ENCODE measurements at regions of chr10 and their contacts with region 1.

Region 1: DNA sequence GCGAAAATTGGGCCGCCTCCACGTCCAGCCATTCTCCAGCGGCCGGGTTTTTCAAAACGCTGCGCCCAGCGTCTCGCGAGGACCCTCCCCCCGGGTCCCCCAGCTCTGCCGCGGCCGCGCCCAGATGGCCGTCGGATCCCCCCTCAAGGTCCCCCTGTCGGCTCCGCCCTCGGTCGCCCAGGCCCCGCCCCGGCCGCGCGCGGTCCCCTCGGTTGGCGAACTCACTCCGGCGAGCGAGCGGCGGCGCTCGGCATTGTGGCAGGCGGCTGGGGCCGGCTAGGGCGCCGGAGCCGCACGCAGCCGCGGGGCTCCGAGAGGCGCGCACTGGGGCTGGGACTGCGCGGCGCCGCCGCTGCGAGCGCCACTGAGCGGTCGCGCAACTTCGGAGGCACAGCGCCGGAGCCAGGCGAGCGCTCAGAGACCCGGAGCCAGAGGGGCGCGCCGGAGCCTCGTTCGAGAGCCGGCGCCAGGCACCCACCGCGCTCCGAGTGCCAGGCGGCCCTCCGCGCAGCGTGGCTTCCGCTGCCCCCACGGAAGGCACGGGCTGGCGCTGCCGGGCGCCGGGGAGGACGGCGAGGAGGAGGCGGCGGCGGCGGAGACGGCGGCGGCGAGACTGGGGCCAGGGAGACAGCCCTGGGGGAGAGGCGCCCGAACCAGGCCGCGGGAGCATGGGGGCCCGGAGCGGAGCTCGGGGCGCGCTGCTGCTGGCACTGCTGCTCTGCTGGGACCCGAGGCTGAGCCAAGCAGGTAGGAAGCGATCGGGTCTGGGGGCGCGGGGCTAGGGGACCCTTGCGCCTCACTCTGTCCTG is at the start of gene UNC5B:
- DNase-seq: peak; percentile 94
- ATAC-seq: peak; percentile 93
- total RNA-seq, gene UNC5B: 13.1 TPM

Region 2: GRCh38 chr10:70903262-70903921 is 309.1 kb before region 1 on chr10:
- intact Hi-C with region 1: loop called (anchors 1 kb)
- DNase-seq: no peak
- ATAC-seq: peak; percentile 57

Region 3: DNA sequence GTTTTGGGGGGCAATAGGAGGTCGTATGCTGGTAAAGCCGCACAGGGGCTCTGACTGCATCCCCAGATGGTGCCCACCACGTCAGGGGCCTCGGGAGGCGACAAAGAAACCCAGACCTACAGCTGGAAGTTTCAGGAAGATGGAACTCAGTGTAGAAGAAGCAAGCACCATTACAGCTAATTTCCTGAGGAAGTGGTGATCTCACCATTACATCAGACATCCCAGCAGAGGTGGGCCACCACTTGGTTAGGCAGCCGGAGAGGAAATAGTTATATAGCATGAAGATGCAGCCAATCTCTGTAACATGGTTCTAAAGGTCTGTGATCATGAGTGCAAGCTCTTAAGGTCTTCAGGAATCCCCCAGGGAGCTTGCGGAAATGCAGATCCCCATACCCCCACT is 196.8 kb before region 1 on chr10:
- intact Hi-C with region 1: loop called (anchors 5 kb)
- DNase-seq: no peak
- ATAC-seq: no peak

Region 4: DNA sequence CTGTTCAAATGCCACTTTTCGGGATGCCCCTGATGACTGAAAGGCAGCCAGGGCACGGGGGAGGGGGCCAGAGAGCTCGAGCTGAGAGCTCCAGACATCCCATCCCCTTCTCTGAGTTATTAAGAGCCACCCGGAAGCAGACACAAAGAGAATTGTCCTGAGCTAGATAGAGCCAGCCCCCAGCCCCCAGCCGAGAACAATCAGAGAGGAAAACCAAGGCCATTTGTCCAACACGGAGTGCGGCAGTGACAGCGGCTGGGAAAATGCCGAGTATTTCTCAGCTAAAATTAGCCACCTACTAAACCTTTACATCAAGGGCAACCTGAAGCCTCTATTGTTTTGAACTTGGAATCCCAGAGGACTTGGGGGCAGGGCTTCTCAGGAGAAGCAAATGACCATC is 50.9 kb after region 1 on chr10:
- intact Hi-C with region 1: loop called (anchors 2 kb)
- DNase-seq: peak; percentile 56
- ATAC-seq: no peak

Region 5: GRCh38 chr10:71285180-71285545 is 72.6 kb after region 1 on chr10:
- intact Hi-C with region 1: loop called (anchors 2 kb)
- DNase-seq: peak; percentile 65
- ATAC-seq: peak; percentile 65

Measured in Right ventricle myocardium inferior (tissue), 1 donor.